ENCODE measurements at regions of chr12 and their contacts with region 1.

Region 1: GRCh38 chr12:50157259-50157658 is 9.9 kb downstream of the CERS5 start:
- DNase-seq: no peak
- ATAC-seq: no peak
- H3K4me3 ChIP-seq: no peak overlapping the region
- H3K4me3 Mint-ChIP-seq: no peak overlapping the region
- H3K27ac ChIP-seq: no peak overlapping the region
- H3K27ac Mint-ChIP-seq: no peak overlapping the region
- H3K4me1 ChIP-seq: no peaks in the 10 kb centered on the region
- H3K4me1 Mint-ChIP-seq: peaks cover 28 to 32% (median 29%) of the 10 kb centered on the region in 3 donors
- H3K27me3 ChIP-seq: no peaks in the 10 kb centered on the region
- H3K27me3 Mint-ChIP-seq: no peaks in the 10 kb centered on the region

Region 2: DNA sequence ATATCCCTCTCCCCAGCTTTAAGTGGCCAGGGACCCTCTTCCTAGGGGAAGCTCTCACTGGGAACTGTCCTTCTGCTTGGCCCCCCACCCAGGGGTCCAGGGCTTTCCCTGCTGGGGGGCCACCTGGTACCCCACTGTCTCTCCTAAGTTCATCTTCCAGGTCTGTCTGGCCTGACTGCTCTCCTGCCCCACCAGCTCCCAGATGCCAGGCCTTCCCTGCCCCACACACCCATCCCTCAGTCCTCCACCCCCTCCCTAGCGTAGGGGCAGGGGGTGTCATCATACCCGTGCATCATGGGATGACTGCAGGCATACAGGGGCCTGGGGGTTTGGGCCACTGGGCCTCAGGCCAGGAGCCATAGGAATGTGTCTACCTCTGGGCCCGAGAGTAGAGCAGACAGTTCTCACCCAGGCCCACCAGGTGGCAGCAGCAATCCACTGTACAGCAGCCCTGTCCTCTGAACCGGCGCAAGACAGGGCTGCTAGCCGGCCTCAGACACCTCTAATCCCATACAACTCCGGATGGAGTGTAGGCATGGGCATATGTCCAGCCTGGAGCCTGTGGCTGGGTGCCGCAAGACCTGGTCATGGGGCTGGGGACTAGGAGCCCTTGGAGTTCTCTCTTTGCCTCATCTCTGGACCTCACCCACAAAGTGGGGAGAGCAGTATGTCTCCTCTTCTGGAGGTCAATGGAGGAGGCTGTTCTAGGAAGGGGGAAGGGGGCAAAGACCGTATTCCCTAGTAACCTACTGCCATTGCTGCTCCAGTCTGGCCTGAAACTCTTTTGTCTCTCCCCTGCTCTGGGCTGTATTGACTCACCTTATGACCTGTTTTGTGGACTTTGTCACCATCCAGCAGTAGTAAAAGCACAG is 82.1 kb before region 1 on chr12:
- CTCF ChIA-PET with region 1: no interaction called
- POLR2A ChIA-PET with region 1: no interaction called
- DNase-seq: peak; percentile 38 to 88 (median 71)
- ATAC-seq: peak; percentile 89 to 94 (median 92)
- H3K4me3 ChIP-seq: no peak overlapping the region
- H3K4me3 Mint-ChIP-seq: no peak overlapping the region
- H3K27ac ChIP-seq: no peak overlapping the region
- H3K27ac Mint-ChIP-seq: no peak overlapping the region
- H3K4me1 ChIP-seq: peaks cover 0 to 14% of the 10 kb centered on the region in 2 experiments
- H3K4me1 Mint-ChIP-seq: peaks cover 8 to 13% (median 9%) of the 10 kb centered on the region in 3 donors
- H3K27me3 ChIP-seq: peaks cover 0 to 8% of the 10 kb centered on the region in 2 experiments
- H3K27me3 Mint-ChIP-seq: peaks cover 0 to 5% of the 10 kb centered on the region in 2 donors

Region 3: GRCh38 chr12:50142993-50143392 is 14.3 kb before region 1 on chr12:
- CTCF ChIA-PET with region 1: interaction called in 1 of 2 experiments, 7 read pairs
- POLR2A ChIA-PET with region 1: interaction called, 4 to 10 read pairs
- DNase-seq: no peak
- ATAC-seq: no peak
- H3K4me3 ChIP-seq: no peak overlapping the region
- H3K4me3 Mint-ChIP-seq: no peak overlapping the region
- H3K27ac ChIP-seq: no peak overlapping the region
- H3K27ac Mint-ChIP-seq: no peak overlapping the region
- H3K4me1 ChIP-seq: no peaks in the 10 kb centered on the region
- H3K4me1 Mint-ChIP-seq: peaks cover 3 to 6% (median 5%) of the 10 kb centered on the region in 3 donors
- H3K27me3 ChIP-seq: no peaks in the 10 kb centered on the region
- H3K27me3 Mint-ChIP-seq: no peaks in the 10 kb centered on the region

Measured in T-cell (primary cell).